Activated T-helper 1 cell treated with anti-CD3 and anti-CD28 coated beads, Interleukin-12 subunit alpha, Interleukin-12 subunit beta, Interleukin-2, Interleukin-4 antibody, amounts not matched to agents 30 ng/mL and 10 ng/mL and 1 ng/mL, durations not matched to agents 14 hours and 24 hours and 36 hours (primary cell): ENCODE measurements at regions of chr2 and their contacts with region 1.

Region 1: GRCh38 chr2:15591692-15592463 is at the start of gene DDX1:
- DNase-seq: peak; percentile 81
- H3K4me3 Mint-ChIP-seq: peak within 1 kb of the TSS; percentile 91
- H3K27ac Mint-ChIP-seq: peak within 1 kb of the TSS; percentile 91
- H3K4me1 Mint-ChIP-seq: peaks cover 30% of the 10 kb centered on the region
- H3K27me3 Mint-ChIP-seq: no peaks in the 10 kb centered on the region
- total RNA-seq, gene DDX1: 104 and 111 TPM in 2 replicates

Region 2: DNA sequence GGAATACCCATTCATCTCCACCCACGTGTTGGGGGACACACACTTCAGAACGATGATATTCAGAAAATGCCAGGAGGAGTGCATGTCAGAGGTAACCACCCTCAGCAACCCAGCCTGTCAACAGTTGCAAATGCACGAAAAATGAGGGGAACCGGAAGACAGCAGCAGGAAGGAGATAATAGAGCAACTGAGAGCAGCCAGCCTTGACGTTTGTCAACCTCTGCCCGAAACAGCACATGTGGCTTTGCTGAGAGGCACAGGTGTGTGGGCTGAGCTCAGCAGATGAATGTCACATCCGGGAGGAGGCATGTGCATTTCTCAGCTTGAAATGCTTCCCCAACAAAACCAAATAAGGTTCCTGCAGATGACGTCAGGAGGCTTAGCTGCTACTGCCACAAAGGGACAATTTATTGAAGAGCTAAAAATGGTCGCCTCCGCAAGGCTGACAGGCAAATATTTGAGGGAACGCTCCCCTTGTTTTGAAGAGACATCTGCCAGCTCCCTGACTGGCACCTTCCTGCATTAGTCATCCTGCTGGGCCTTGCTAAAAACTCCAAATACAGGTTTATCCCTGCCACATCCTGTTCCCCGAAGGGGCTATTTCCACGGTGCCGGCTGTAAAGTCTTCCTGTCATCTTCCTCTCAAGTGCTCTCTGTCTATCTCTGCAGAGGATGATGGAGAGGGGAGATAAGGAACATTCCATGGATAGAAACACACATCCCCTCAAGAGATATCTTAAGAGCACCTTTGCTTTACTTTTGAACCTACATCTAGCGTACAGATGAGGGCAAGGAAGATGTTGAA is 449.6 kb before region 1 on chr2:
- intact Hi-C with region 1: loop called (anchors 1 kb)
- DNase-seq: peak; percentile 72
- H3K4me3 Mint-ChIP-seq: peak overlapping the region; percentile 53
- H3K27ac Mint-ChIP-seq: peak overlapping the region; percentile 92
- H3K4me1 Mint-ChIP-seq: peaks cover 25% of the 10 kb centered on the region
- H3K27me3 Mint-ChIP-seq: no peaks in the 10 kb centered on the region

Region 3: GRCh38 chr2:15609341-15610042 is 17.6 kb after region 1 on chr2:
- intact Hi-C with region 1: no loop called
- DNase-seq: no peak
- H3K4me3 Mint-ChIP-seq: no peak overlapping the region
- H3K27ac Mint-ChIP-seq: no peak overlapping the region
- H3K4me1 Mint-ChIP-seq: no peaks in the 10 kb centered on the region
- H3K27me3 Mint-ChIP-seq: no peaks in the 10 kb centered on the region

Region 4: DNA sequence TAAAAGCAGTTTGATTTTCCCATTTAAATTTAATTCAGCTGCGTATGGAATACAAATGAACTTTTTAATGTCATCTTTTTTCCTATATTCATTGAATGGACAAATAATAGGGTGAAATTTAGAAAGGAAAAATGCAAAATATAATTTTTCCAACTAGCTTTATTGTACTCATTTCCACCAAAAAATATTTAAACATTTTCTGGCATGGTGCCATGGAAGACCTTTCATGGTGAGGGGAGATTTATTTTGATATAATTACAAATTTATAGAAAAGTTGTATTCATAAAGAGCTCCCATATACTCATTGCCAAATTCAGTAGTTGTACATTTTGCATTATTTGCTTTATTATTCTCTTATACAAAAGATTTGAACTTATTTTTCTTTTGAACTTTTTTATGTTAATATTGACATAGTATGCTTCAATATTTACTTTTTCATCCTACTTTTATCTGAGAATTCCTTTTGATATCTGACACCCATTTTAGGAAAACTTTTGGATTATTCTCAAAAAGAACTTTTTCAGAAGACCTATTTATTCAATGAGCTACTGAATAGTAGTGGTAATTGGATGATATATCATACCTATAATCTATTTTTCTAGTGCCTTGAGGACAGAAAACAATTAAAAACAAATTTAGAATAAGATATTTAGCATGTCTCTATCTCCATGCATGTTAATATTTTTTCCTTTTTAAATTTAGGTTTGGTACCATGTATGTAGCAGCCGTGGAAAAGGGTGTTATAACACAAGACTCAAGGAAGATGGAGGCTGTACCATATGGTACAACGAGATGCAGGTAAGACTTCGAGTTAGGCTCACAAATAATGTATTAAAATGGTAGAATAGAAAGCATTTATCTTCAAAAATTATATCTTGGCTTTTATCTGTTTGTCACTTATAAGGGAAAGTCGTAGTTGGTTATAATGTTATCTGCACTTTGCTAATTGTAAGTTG is 37.3 kb after region 1 on chr2:
- intact Hi-C with region 1: loop called (anchors 5 kb)
- DNase-seq: no peak
- H3K4me3 Mint-ChIP-seq: no peak overlapping the region
- H3K27ac Mint-ChIP-seq: no peak overlapping the region
- H3K4me1 Mint-ChIP-seq: no peaks in the 10 kb centered on the region
- H3K27me3 Mint-ChIP-seq: no peaks in the 10 kb centered on the region